Tibial artery (tissue), 4 donors: ENCODE measurements at regions of chr2 and their contacts with region 1.

Region 1: GRCh38 chr2:147980940-147981528 is 39.5 kb downstream of the ORC4 start:
- DNase-seq: no peak
- H3K4me3 ChIP-seq: no peak overlapping the region
- H3K27ac ChIP-seq: no peak overlapping the region
- H3K4me1 ChIP-seq: peaks cover 0 to 5% (median 0%) of the 10 kb centered on the region in 4 donors
- H3K27me3 ChIP-seq: no peaks in the 10 kb centered on the region
- CTCF ChIP-seq: no peak

Region 2: GRCh38 chr2:148901142-148901541 is 920.1 kb after region 1 on chr2:
- intact Hi-C with region 1: loop called (anchors 5 kb)
- DNase-seq: no peak
- H3K4me3 ChIP-seq: no peak overlapping the region
- H3K27ac ChIP-seq: no peak overlapping the region
- H3K4me1 ChIP-seq: no peaks in the 10 kb centered on the region
- H3K27me3 ChIP-seq: no peaks in the 10 kb centered on the region
- CTCF ChIP-seq: no peak